Activated naive CD4-positive, alpha-beta T cell treated with anti-CD3 and anti-CD28 coated beads for 36 hours (primary cell): ENCODE measurements at regions of chr12 and their contacts with region 1.

Region 1: DNA sequence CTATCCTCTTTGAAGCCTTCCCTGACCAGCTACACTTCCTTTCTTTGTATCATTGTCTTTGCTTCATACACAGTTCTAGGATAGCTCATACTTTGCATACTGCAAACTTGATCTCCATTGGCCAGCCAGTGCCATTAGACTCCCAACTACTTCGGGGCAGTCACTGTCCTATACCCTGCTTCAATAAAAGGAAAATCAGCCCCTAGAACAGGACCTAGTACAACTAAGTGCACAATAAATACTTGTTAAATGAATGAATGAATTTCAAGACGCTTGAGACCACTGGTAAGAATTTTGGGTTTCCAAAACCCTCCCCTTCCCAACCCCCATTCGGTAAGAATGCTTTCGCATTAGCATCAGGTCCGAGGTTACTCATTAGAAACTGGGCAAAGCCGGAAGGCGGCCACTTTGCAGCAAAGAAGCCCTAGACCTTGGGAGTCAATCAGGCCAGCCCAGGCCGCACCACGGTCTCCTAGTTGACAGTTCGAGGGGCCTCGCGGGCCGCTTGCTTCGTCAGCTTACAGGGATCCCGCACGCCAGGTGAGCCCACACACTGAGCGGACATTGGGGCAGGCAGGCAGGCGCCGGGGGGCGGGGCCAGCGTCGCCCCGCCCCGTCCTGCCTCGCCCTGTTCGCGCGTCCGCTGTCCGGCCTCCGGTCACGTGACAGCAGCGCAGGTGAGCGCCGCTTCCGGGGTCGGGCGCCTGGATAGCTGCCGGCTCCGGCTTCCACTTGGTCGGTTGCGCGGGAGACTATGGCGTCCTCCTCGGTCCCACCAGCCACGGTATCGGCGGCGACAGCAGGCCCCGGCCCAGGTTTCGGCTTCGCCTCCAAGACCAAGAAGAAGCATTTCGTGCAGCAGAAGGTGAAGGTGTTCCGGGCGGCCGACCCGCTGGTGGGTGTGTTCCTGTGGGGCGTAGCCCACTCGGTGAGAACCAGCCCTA is at the start of gene PIP4K2C:
- DNase-seq: peak; percentile 83
- H3K4me3 Mint-ChIP-seq: peak within 1 kb of the TSS; percentile 82
- H3K27ac Mint-ChIP-seq: peak within 1 kb of the TSS; percentile 73
- H3K4me1 Mint-ChIP-seq: peaks cover 21% of the 10 kb centered on the region
- H3K27me3 Mint-ChIP-seq: no peaks in the 10 kb centered on the region
- total RNA-seq, gene PIP4K2C: 11.8 to 12.7 TPM

Region 2: DNA sequence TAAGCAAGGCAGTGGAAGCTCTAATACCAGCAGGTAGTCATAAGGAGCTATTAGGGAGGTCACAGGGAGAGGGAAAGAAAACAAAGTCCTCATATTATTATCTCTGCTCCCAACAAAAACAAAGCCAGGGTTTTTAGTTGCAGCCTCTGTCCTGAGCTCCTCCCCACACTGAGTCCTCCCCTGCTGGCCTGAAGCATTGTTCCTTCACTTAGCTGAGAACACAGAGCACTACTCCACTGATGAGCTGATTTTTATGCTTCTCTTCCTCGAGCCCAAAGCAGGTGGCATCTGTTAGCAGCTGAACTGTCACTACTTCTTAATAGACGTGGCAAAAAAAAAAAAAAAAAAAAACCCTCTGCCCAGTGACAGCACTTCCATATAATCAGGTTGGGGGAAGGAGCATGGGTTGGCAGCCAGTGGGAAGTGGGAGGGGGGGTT is 329.4 kb before region 1 on chr12:
- CTCF ChIA-PET with region 1: no interaction called
- intact Hi-C with region 1: no loop called
- DNase-seq: no peak
- H3K4me3 Mint-ChIP-seq: no peak overlapping the region
- H3K27ac Mint-ChIP-seq: no peak overlapping the region
- H3K4me1 Mint-ChIP-seq: no peaks in the 10 kb centered on the region
- H3K27me3 Mint-ChIP-seq: no peaks in the 10 kb centered on the region

Region 3: DNA sequence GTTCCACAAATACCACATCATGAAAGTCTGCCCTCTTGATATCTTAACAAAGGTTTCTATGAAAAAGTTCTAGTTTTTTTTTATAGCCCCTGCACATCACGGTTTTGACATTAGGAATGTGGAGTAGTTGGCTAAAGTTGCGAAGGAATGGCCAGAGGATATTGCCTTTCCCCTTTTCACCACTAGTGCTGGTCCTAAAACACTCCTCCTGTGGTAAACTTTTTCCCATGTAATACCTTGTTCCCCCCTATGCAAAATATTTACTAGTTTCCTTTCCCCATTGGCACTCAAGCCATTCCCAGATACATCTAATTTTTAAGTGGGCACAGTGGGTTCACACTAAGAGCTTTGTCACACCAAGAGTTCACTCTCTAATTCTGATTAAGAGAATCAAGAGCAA is 193.4 kb before region 1 on chr12:
- CTCF ChIA-PET with region 1: no interaction called
- intact Hi-C with region 1: no loop called
- DNase-seq: no peak
- H3K4me3 Mint-ChIP-seq: no peak overlapping the region
- H3K27ac Mint-ChIP-seq: no peak overlapping the region
- H3K4me1 Mint-ChIP-seq: peaks cover 9% of the 10 kb centered on the region
- H3K27me3 Mint-ChIP-seq: no peaks in the 10 kb centered on the region

Region 4: DNA sequence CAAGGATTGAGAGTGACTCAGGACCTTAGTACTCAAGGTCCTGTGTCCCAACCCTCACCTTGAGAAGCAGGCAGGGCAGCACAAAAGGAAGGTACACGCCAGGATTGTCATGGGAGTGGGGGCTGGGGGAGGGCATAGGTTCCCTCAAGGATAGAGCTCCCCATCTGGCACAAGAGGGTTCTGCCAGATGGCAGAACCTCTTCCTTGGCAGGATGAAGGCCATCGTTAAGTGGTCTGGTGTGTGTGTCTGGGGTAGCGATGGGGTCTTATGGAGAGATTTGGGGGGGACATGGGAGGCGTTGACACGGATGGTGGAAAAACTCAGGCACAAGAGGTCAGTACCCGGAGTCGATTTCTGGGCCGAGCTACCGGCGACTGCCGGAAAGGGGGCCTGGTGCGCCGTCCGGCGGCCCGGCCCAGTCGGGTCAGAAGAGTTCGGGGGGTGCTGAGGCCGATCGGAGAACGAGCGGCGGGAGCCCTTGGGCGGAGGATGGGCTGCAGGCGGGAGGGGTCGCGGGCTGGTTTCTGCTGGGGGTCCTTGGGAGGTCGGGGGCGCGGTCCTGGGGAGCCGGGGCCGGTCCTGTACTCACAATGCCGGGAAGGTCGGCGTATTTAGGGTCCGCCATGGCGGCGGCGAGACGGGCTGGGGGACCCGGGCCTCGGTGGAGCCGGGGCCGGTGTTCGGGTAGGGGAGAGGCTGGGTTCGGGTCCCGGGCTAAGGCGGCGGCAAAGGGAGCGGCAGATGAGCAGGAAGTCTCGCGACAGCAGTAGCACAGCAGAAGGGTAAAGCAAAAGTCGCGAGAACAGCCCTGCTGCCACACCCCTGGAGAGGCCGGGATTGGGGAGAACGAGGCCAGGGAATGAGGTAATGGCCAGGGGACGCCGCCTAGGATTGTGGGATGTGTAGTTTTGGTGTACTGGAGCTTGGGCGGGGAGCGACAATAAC is 44.1 kb before region 1 on chr12 and contains the start of gene DCTN2:
- CTCF ChIA-PET with region 1: no interaction called
- intact Hi-C with region 1: loop called (anchors 1 kb)
- DNase-seq: peak; percentile 98
- H3K4me3 Mint-ChIP-seq: peak within 1 kb of the TSS; percentile 91
- H3K27ac Mint-ChIP-seq: peak within 1 kb of the TSS; percentile 82
- H3K4me1 Mint-ChIP-seq: peaks cover 47% of the 10 kb centered on the region
- H3K27me3 Mint-ChIP-seq: no peaks in the 10 kb centered on the region
- total RNA-seq, gene DCTN2: 65.1 to 71.7 TPM

Region 5: DNA sequence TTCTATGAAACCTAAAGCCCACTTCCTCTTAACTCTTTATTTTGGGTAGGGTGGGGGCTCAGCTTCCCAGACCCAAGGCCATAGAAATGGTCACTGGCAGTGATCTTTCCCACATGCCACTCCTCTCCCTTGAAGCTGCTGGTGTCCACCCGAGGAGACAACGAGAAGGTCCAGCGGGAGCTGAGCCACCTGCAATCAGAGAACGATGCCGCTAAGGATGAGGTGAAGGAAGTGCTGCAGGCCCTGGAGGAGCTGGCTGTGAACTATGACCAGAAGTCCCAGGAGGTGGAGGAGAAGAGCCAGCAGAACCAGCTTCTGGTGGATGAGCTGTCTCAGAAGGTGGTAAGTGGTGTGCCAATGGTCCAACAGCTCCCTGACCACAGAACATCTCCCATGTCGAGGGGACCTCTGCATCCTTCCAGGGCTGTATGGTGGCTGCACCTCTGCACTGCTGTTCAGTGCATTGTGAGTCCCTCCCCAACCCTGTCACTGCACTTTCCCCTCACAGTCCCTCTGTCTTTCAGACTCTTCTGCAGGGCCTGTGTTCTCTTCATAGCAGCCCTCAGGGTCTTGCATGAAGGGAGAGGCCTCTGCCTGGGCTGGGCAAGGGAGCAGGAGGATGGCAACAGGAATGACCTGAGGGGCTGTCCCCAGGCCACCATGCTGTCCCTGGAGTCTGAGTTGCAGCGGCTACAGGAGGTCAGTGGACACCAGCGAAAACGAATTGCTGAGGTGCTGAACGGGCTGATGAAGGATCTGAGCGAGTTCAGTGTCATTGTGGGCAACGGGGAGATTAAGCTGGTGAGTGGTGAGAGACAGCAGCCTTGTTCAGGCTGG is 18.7 kb before region 1 on chr12:
- CTCF ChIA-PET with region 1: no interaction called
- intact Hi-C with region 1: no loop called
- DNase-seq: no peak
- H3K4me3 Mint-ChIP-seq: no peak overlapping the region
- H3K27ac Mint-ChIP-seq: no peak overlapping the region
- H3K4me1 Mint-ChIP-seq: no peaks in the 10 kb centered on the region
- H3K27me3 Mint-ChIP-seq: no peaks in the 10 kb centered on the region

Region 6: GRCh38 chr12:57604454-57604991 is 13.7 kb after region 1 on chr12 and contains the start of gene DTX3:
- CTCF ChIA-PET with region 1: interaction called, 4 read pairs
- intact Hi-C with region 1: loop called (anchors 2 kb)
- DNase-seq: peak; percentile 62
- H3K4me3 Mint-ChIP-seq: peak within 1 kb of the TSS; percentile 77
- H3K27ac Mint-ChIP-seq: peak within 1 kb of the TSS; percentile 63
- H3K4me1 Mint-ChIP-seq: peaks cover 22% of the 10 kb centered on the region
- H3K27me3 Mint-ChIP-seq: no peaks in the 10 kb centered on the region
- total RNA-seq, gene DTX3: 15.8 to 16.2 TPM

Region 7: GRCh38 chr12:57611108-57611809 is 20.5 kb after region 1 on chr12 and contains the start of gene ARHGEF25:
- CTCF ChIA-PET with region 1: interaction called, 4 read pairs
- intact Hi-C with region 1: loop called (anchors 1 kb)
- DNase-seq: peak; percentile 58
- H3K4me3 Mint-ChIP-seq: peak within 1 kb of the TSS; percentile 65
- H3K27ac Mint-ChIP-seq: no peak within 1 kb of the TSS
- H3K4me1 Mint-ChIP-seq: peaks cover 9% of the 10 kb centered on the region
- H3K27me3 Mint-ChIP-seq: peaks cover 19% of the 10 kb centered on the region
- total RNA-seq, gene ARHGEF25: 1.4 to 1.5 TPM

Region 8: GRCh38 chr12:57621497-57622292 is 30.9 kb after region 1 on chr12:
- CTCF ChIA-PET with region 1: interaction called, 101 read pairs
- intact Hi-C with region 1: loop called (anchors 2 kb)
- DNase-seq: peak; percentile 65
- H3K4me3 Mint-ChIP-seq: peak overlapping the region; percentile 71
- H3K27ac Mint-ChIP-seq: no peak overlapping the region
- H3K4me1 Mint-ChIP-seq: peaks cover 27% of the 10 kb centered on the region
- H3K27me3 Mint-ChIP-seq: peaks cover 86% of the 10 kb centered on the region

Region 9: DNA sequence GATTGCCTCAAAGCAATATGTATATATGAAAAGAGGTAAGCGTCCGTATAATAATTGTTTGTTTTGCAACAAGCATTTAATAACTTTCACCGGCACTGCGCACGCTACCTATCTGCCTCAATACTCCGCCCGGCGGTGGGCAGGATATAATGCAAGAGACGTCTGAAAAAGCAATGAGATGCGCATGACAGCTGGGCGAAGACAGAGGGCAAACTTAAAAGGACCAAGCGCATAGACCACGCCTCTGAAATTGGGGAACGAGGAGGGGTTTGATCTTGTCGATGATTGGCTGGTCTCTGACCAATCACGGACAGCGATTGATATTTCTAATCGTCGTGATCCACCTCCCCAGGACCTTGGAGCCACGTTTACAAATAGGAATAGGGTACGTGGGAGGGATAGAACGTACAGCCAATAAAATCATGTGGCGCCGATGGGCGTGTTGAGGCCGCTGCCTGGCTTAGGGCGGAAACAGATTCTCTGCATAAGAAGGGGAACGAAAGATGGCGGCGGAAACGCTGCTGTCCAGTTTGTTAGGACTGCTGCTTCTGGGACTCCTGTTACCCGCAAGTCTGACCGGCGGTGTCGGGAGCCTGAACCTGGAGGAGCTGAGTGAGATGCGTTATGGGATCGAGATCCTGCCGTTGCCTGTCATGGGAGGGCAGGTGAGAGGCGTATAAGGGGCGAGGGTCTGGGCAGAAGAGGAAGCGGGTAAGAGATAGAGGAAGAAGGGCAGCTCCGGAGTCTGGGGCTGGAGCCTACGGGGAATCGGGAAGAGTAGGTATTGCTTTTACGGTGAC is 103.1 kb after region 1 on chr12 and contains the start of gene OS9:
- CTCF ChIA-PET with region 1: no interaction called
- intact Hi-C with region 1: loop called (anchors 1 kb)
- DNase-seq: peak; percentile 99
- H3K4me3 Mint-ChIP-seq: no peak within 1 kb of the TSS
- H3K27ac Mint-ChIP-seq: no peak within 1 kb of the TSS
- H3K4me1 Mint-ChIP-seq: peaks cover 3% of the 10 kb centered on the region
- H3K27me3 Mint-ChIP-seq: no peaks in the 10 kb centered on the region
- total RNA-seq, gene OS9: 60.7 to 60.9 TPM

Region 10: GRCh38 chr12:57836442-57837375 is 245.9 kb after region 1 on chr12:
- CTCF ChIA-PET with region 1: no interaction called
- intact Hi-C with region 1: loop called (anchors 5 kb)
- DNase-seq: peak; percentile 81
- H3K4me3 Mint-ChIP-seq: peak overlapping the region; percentile 40
- H3K27ac Mint-ChIP-seq: peak overlapping the region; percentile 89
- H3K4me1 Mint-ChIP-seq: peaks cover 97% of the 10 kb centered on the region
- H3K27me3 Mint-ChIP-seq: no peaks in the 10 kb centered on the region